GM12878 (cell line): ENCODE measurements at regions of chr3 and their contacts with region 1.

Region 1: DNA sequence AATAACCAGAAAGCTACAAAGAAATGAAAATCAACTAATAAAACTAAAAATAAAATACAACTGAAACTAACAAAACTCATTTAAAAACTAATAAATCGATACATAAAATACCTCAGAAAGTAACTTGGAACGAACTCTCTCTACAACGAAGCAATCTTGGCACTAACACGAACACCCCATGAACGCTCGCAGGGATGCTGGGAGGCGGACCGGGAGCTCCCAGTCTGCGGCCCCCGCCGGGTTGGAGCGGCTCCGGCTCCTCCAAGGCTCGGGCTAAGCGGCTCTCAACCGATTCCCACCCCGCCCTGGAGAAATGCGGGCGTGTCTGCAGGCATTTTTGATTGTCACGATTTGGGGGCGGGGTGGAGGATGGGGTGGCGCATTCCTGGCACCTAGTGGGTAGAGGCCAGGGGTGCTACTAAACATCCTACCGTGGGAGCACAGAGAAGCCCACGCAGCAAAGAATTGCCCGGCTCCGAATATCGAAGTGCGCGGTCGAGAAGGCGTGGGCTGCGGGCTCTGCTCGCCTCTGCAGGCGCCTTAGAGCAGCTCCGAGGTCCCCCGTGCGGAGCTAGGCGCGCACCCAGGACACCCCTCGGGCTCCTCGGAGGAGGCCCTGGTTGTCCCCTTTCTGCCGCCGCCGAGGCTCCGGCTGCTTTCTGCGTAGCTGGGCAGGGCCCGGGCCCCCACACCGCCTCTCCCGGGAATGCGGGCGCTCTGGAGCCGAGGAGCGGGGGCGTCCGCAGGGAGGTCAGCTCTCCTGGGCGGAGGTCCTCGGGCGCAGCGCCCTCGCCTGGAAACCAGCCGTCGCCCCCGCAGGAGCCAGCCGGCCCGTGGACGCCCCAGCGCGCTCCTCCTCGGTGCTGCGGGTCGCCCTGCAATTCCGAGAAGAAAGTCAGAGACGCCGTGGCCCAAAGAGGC is 16.4 kb upstream of the LAMP3 start:
- DNase-seq: no peak
- ATAC-seq: peak; percentile 87
- H3K4me3 ChIP-seq: peak overlapping the region; percentile 45
- H3K27ac ChIP-seq: no peak overlapping the region
- H3K4me1 ChIP-seq: peaks cover 6% of the 10 kb centered on the region; the same call in 1 of the 2 replicates
- H3K27me3 ChIP-seq: peaks cover 4 to 16% of the 10 kb centered on the region in 2 experiments
- CTCF ChIP-seq: peak; percentile 5 to 56 (median 27); a peak in 3 of 6 replicates
- EP300 ChIP-seq: no peak
- POLR2A ChIP-seq: no peak
- RAD21 ChIP-seq: peak; percentile 41; the same call in 1 of the 2 replicates

Region 2: DNA sequence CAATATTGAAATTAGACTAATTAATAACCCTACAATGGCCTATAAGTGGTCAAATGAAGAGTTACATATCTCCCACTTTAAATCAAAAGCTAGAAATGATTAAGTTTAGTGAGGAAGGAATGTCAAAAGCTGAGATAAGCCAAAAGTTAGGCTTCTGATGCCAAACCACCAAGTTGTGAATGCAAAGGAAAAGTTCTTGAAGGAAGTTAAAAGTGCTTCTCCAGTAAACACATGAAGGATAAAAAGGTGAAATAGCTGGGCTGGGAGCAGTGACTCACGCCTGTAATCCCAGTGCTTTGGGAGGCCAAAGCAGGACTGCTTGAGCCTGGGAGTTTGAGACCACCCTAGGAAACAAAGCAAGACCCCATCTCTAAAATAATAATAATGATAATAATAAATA is 151.6 kb before region 1 on chr3:
- CTCF ChIA-PET with region 1: no interaction called
- POLR2A ChIA-PET with region 1: no interaction called
- RAD21 ChIA-PET with region 1: no interaction called
- SMC1A ChIA-PET with region 1: no interaction called
- in situ Hi-C with region 1: no loop called
- intact Hi-C with region 1: no loop called
- DNase-seq: no peak
- ATAC-seq: no peak
- H3K4me3 ChIP-seq: no peak overlapping the region
- H3K27ac ChIP-seq: no peak overlapping the region
- H3K4me1 ChIP-seq: no peaks in the 10 kb centered on the region
- H3K27me3 ChIP-seq: no peaks in the 10 kb centered on the region
- CTCF ChIP-seq: no peak
- EP300 ChIP-seq: no peak
- POLR2A ChIP-seq: no peak
- RAD21 ChIP-seq: no peak

Region 3: DNA sequence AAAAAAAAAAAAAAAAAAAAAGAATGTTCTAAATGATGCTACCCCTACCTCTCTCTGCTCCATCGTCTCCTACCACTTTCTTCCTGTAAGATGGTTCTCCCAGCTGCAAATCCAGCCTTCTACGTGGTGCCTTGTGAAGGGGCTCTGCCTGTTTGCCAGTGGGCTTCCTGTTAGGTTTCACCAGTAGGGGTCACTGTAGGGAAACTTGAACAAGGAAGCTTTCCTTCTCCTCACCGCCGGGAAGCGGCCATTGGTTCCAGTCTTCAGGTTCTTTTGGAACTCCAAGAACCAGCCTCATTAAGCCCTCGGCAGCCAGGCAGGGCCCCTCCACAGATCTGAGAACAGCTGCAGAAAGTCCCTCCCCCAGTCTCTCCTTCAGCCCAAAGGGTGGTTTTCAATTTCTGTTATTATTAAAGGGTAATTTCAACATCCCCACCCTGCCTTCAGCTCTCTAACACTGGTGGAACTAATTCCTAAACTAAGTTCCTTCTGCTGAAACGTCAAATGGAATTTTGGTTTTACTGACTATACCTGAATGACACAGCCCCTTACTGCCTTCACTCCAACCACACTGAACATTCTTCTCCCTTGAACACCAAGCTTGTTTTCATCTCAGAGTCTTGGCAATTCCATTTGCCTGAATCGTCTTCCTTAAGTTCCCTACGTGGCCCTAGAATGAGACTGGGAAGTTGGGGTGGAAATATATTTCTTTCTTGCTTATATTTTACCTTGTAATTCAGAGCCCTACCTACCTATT is 93.1 kb before region 1 on chr3:
- CTCF ChIA-PET with region 1: interaction called, 10 read pairs
- POLR2A ChIA-PET with region 1: no interaction called
- RAD21 ChIA-PET with region 1: interaction called, 3 read pairs
- SMC1A ChIA-PET with region 1: interaction called, 4 read pairs
- in situ Hi-C with region 1: no loop called
- intact Hi-C with region 1: no loop called
- DNase-seq: no peak
- ATAC-seq: peak; percentile 54
- H3K4me3 ChIP-seq: no peak overlapping the region
- H3K27ac ChIP-seq: no peak overlapping the region
- H3K4me1 ChIP-seq: no peaks in the 10 kb centered on the region
- H3K27me3 ChIP-seq: no peaks in the 10 kb centered on the region
- CTCF ChIP-seq: peak; percentile 26 to 50 (median 36); a peak in 5 of 6 replicates
- EP300 ChIP-seq: no peak
- POLR2A ChIP-seq: no peak
- RAD21 ChIP-seq: peak; percentile 23; the same call in 1 of the 2 replicates

Region 4: DNA sequence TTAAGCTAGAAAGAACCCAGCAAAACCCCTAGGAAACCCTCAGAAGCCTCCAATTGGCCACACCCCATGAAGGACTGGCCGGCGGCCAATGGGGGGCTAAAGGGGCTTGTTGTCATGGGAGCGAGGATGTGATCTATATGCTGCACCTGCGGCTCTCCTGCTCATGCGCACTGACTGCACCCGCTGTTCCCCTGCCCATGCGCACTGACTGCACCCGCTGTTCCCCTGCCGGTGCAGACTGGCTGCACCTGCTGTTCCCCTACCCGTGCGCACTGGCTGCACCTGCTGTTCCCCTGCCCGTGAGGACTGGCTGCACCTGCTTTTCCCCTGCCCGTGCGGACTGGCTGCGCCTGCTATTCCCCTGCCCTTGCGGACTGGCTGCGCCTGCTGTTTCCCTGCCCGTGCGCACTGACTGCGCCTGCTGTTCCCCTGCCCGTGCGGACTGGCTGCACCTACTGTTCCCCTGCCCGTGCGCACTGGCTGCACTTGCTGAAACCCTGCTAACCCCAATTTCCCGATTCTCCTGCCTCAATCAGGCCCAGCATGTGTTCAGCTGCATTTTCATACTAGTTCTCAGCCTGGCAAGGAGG is 62.8 kb before region 1 on chr3:
- CTCF ChIA-PET with region 1: interaction called, 140 read pairs
- POLR2A ChIA-PET with region 1: no interaction called
- RAD21 ChIA-PET with region 1: interaction called, 89 read pairs
- SMC1A ChIA-PET with region 1: interaction called, 71 read pairs
- in situ Hi-C with region 1: no loop called
- intact Hi-C with region 1: no loop called
- DNase-seq: no peak
- ATAC-seq: peak; percentile 96
- H3K4me3 ChIP-seq: peak overlapping the region; percentile 45
- H3K27ac ChIP-seq: no peak overlapping the region
- H3K4me1 ChIP-seq: peaks cover 3% of the 10 kb centered on the region; the same call in 1 of the 2 replicates
- H3K27me3 ChIP-seq: no peaks in the 10 kb centered on the region
- CTCF ChIP-seq: no peak
- EP300 ChIP-seq: no peak
- POLR2A ChIP-seq: peak; percentile 50; the same call in 1 of the 2 replicates
- RAD21 ChIP-seq: no peak

Region 5: DNA sequence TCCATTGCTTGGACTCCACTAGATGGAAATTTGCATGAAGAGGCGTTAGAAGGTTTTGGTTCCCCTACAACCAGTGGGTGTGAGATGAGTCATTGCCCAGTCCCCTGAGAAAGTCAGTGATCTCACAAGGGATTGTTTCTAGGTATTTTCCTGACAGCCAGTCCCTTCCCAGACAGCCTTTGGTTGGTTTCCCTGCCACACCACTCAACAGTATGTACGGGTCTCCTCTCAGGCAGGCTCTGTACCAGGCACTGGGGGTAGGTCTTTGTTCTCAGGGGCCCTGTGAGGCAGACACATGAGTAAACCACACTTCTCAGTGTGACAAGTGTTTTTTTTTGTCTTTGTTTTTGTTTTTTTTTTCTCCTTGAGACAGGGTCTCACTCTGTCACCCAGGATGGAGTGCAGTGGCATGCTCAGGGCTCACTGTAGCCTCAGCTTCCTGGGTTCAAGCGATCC is 20.3 kb before region 1 on chr3:
- CTCF ChIA-PET with region 1: interaction called, 82 read pairs
- POLR2A ChIA-PET with region 1: no interaction called
- RAD21 ChIA-PET with region 1: interaction called, 12 read pairs
- SMC1A ChIA-PET with region 1: interaction called, 29 read pairs
- in situ Hi-C with region 1: no loop called
- intact Hi-C with region 1: loop called (anchors 2 kb)
- DNase-seq: peak; percentile 97
- ATAC-seq: peak; percentile 71
- H3K4me3 ChIP-seq: peak overlapping the region; percentile 84
- H3K27ac ChIP-seq: peak overlapping the region; percentile 91
- H3K4me1 ChIP-seq: peaks cover 43% of the 10 kb centered on the region
- H3K27me3 ChIP-seq: no peaks in the 10 kb centered on the region
- CTCF ChIP-seq: no peak
- EP300 ChIP-seq: peak; percentile 90 to 91
- POLR2A ChIP-seq: no peak; the same call in 1 of the 2 replicates
- RAD21 ChIP-seq: no peak

Region 6: GRCh38 chr3:183230826-183231225 is 51.9 kb after region 1 on chr3:
- CTCF ChIA-PET with region 1: no interaction called
- POLR2A ChIA-PET with region 1: no interaction called
- RAD21 ChIA-PET with region 1: no interaction called
- SMC1A ChIA-PET with region 1: no interaction called
- in situ Hi-C with region 1: no loop called
- intact Hi-C with region 1: no loop called
- DNase-seq: no peak
- ATAC-seq: no peak
- H3K4me3 ChIP-seq: no peak overlapping the region
- H3K27ac ChIP-seq: no peak overlapping the region
- H3K4me1 ChIP-seq: no peaks in the 10 kb centered on the region
- H3K27me3 ChIP-seq: no peaks in the 10 kb centered on the region
- CTCF ChIP-seq: no peak
- EP300 ChIP-seq: no peak
- POLR2A ChIP-seq: no peak
- RAD21 ChIP-seq: no peak

Region 7: DNA sequence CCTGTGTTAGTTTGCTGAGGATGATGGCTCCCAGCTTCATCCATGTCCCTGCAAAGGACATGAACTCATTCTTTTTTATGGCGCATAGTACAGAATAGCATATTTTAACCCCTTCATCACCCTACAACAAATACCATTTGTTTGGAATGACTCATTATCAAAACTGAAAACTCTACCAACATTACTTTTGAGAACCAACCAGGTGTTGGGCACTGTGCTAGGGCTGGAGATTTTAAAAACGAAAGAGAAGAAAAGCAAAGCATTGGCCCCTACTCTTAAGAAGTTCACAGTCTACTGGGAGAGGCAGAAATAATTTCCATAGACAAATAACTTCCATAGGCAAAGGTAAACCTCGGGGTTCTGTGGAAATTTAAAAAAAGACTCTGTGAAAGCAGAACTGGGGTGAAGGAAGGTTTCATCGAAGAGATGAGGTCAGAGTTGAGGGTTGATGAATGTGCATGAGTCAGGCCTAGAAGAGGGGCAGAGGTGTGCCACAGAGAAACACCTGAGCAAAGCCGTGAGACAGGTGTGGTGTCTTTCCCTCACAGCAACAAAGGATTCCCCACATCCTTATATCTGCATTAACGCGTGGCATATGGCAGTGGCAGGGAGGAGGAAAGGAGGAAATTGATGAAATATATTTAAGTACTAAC is 198.5 kb after region 1 on chr3:
- CTCF ChIA-PET with region 1: interaction called, 400 read pairs
- POLR2A ChIA-PET with region 1: interaction called, 23 read pairs
- RAD21 ChIA-PET with region 1: interaction called, 256 read pairs
- SMC1A ChIA-PET with region 1: interaction called, 265 read pairs
- in situ Hi-C with region 1: loop called (anchors 5 kb)
- intact Hi-C with region 1: loop called (anchors 1 kb)
- DNase-seq: no peak
- ATAC-seq: peak; percentile 46
- H3K4me3 ChIP-seq: no peak overlapping the region
- H3K27ac ChIP-seq: no peak overlapping the region
- H3K4me1 ChIP-seq: peaks cover 11% of the 10 kb centered on the region; the same call in 1 of the 2 replicates
- H3K27me3 ChIP-seq: no peaks in the 10 kb centered on the region
- CTCF ChIP-seq: no peak
- EP300 ChIP-seq: no peak
- POLR2A ChIP-seq: no peak
- RAD21 ChIP-seq: no peak

Region 8: GRCh38 chr3:183513046-183513706 is 334.3 kb after region 1 on chr3:
- CTCF ChIA-PET with region 1: no interaction called
- POLR2A ChIA-PET with region 1: no interaction called
- RAD21 ChIA-PET with region 1: no interaction called
- SMC1A ChIA-PET with region 1: no interaction called
- in situ Hi-C with region 1: no loop called
- intact Hi-C with region 1: no loop called
- DNase-seq: no peak
- ATAC-seq: peak; percentile 66
- H3K4me3 ChIP-seq: no peak overlapping the region
- H3K27ac ChIP-seq: no peak overlapping the region
- H3K4me1 ChIP-seq: peaks cover 32% of the 10 kb centered on the region
- H3K27me3 ChIP-seq: no peaks in the 10 kb centered on the region
- CTCF ChIP-seq: no peak
- EP300 ChIP-seq: peak in 1 of 2 experiments; percentile 61; a peak in 1 of 4 replicates
- POLR2A ChIP-seq: no peak
- RAD21 ChIP-seq: no peak

Region 9: DNA sequence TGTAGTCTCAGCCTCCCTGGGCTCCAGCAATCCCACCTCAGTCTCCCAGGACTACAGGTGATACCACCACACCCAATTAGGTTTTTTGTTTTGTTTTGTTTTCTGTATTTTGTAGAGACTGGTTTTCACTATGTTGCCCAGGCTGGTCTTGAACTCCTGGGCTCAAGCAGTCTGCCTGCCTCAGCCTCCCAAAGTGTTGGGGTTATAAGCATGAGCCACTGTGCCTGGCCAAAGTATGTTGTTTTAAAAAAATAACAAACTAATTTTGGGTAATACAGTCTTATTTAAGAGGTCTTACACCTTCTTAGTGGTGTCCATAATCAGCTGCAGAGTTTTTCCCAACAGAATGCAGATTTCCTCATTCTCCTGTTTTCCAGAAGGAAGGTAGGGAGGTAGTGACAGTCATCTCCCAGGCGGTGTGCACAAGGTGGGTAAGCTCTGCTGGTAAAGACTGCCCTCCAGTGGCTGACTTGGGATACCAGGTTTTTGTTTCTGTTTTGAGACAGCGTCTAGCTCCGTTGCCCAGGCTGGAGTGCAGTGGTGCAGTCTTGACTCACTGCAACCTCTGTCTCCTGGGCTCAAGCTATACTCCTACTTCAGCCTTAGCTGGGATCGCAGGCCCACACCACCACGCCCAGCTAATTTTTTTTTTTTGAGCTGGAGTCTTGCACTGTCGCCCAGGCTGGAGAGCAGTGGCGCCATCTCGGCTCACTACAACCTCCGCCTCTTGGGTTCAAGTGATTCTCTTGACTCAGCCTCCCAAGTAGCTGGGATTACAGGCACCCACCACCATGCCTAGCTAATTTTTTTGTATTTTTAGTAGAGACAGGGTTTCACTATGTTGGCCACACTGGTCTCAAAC is 588.1 kb after region 1 on chr3:
- CTCF ChIA-PET with region 1: no interaction called
- POLR2A ChIA-PET with region 1: no interaction called
- RAD21 ChIA-PET with region 1: no interaction called
- SMC1A ChIA-PET with region 1: no interaction called
- in situ Hi-C with region 1: no loop called
- intact Hi-C with region 1: loop called (anchors 5 kb)
- DNase-seq: no peak
- ATAC-seq: peak; percentile 99
- H3K4me3 ChIP-seq: no peak overlapping the region
- H3K27ac ChIP-seq: no peak overlapping the region
- H3K4me1 ChIP-seq: no peaks in the 10 kb centered on the region
- H3K27me3 ChIP-seq: no peaks in the 10 kb centered on the region
- CTCF ChIP-seq: peak; percentile 67 to 82 (median 79)
- EP300 ChIP-seq: no peak
- POLR2A ChIP-seq: no peak
- RAD21 ChIP-seq: peak; percentile 89